Mammary epithelial cell (primary cell): ENCODE measurements at regions of chr7 and their contacts with region 1.

Region 1: DNA sequence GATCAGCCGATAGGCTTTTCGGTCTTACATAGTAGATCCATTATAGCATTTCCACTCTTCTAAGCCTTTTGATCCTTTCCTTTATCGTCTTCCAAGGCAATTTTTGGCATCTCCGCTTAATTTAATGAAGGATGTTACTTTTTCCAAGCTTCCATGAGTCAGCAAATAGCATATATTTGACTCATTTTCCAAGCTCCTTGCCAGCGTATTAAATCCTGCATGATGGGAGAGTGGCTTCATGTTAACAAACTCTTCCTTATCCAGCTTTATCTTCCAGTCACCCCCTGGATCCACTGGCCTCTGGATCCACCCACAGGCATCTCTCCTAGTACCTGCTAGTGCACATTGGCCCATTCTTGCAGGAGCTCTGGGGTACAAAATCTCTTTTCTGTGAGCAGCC is 13.0 kb downstream of the OR9A2 start:
- DNase-seq: peak; percentile 23
- H3K4me3 ChIP-seq: no peak overlapping the region
- H3K27ac ChIP-seq: no peak overlapping the region
- H3K4me1 ChIP-seq: peaks cover 10% of the 10 kb centered on the region
- H3K27me3 ChIP-seq: no peaks in the 10 kb centered on the region
- CTCF ChIP-seq: no peak

Region 2: DNA sequence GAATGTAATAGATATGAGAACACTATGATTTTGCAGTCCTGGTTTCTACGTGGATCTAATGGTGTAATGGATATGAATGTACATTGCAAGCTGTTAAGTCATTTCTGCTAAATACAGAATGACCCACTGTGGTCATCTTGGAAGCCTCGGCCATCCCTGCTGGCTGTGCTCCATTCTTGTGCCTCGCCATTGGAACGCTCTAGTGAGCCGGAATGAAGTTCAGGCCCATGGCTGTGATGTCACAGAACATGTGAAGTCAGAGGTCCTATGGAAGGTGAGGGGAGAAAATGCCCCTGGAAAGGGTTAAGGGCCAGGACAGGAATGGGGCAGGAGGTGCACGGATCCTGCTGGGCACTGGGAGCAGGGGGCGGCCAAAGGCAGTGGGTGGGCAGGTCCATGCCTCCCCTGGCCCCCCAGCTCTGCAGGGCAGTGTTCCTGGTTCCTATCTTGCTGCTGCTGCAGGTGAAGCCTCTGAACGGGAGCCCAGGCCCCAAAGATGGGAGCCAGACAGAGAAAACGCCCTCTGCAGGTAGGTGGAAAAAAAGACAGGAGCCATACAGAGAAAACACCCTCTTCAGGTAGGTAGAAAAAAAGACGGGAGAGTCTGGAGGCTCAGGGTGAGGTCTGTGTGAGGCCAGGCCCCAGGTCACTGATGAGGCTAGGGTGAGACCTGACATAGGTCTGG is 74.5 kb before region 1 on chr7 and contains the start of gene LLCFC1:
- CTCF ChIA-PET with region 1: no interaction called
- dilution Hi-C with region 1: no loop called
- in situ Hi-C with region 1: no loop called
- intact Hi-C with region 1: no loop called
- DNase-seq: no peak
- H3K4me3 ChIP-seq: no peak within 1 kb of the TSS
- H3K27ac ChIP-seq: no peak within 1 kb of the TSS
- H3K4me1 ChIP-seq: peaks cover 21% of the 10 kb centered on the region
- H3K27me3 ChIP-seq: no peaks in the 10 kb centered on the region
- CTCF ChIP-seq: peak in 1 of 2 donors; percentile 51
- total RNA-seq, gene LLCFC1: not detected

Region 3: GRCh38 chr7:143214789-143215679 is 201.1 kb after region 1 on chr7:
- CTCF ChIA-PET with region 1: interaction called, 3 read pairs
- dilution Hi-C with region 1: no loop called
- in situ Hi-C with region 1: loop called (anchors 5 kb)
- intact Hi-C with region 1: no loop called
- DNase-seq: peak; percentile 67
- H3K4me3 ChIP-seq: no peak overlapping the region
- H3K27ac ChIP-seq: no peak overlapping the region
- H3K4me1 ChIP-seq: no peaks in the 10 kb centered on the region
- H3K27me3 ChIP-seq: no peaks in the 10 kb centered on the region
- CTCF ChIP-seq: peak; percentile 99 to 100